A549 (cell line): ENCODE measurements at regions of chr11 and their contacts with region 1.

Region 1: GRCh38 chr11:43895601-43896000 is 15.0 kb downstream of the ALKBH3 start:
- DNase-seq: no peak
- ATAC-seq: no peak
- H3K4me3 ChIP-seq: no peak overlapping the region
- H3K27ac ChIP-seq: no peak overlapping the region
- H3K4me1 ChIP-seq: no peaks in the 10 kb centered on the region
- CTCF ChIP-seq: no peak
- EP300 ChIP-seq: no peak
- POLR2A ChIP-seq: no peak
- RAD21 ChIP-seq: no peak

Region 2: GRCh38 chr11:43819926-43820325 is 75.7 kb before region 1 on chr11:
- CTCF ChIA-PET with region 1: no interaction called
- POLR2A ChIA-PET with region 1: no interaction called
- DNase-seq: no peak
- ATAC-seq: no peak
- H3K4me3 ChIP-seq: no peak overlapping the region
- H3K27ac ChIP-seq: no peak overlapping the region
- H3K4me1 ChIP-seq: no peaks in the 10 kb centered on the region
- CTCF ChIP-seq: no peak
- EP300 ChIP-seq: no peak
- POLR2A ChIP-seq: no peak
- RAD21 ChIP-seq: no peak

Region 3: DNA sequence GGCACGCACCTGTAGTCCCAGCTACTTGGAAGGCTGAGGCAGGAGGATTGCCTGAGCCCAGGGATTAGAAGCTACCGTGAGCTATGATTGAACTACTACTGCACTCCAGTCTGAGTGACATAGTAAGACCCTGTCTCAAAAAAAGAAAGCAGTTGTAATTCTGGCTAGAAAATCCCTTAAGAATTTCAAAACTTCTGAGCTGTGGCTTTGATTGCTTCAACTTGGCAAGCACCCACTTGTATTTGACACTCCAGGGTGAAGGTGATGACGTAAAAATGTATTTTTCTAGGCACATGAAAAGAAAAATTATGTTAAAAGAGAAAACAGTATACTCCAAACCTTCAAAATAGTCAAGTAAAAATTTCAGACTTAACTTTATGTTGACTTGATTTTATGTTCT is 38.6 kb before region 1 on chr11:
- CTCF ChIA-PET with region 1: no interaction called
- POLR2A ChIA-PET with region 1: no interaction called
- DNase-seq: no peak
- ATAC-seq: no peak
- H3K4me3 ChIP-seq: no peak overlapping the region
- H3K27ac ChIP-seq: no peak overlapping the region
- H3K4me1 ChIP-seq: no peaks in the 10 kb centered on the region
- CTCF ChIP-seq: no peak
- EP300 ChIP-seq: no peak
- POLR2A ChIP-seq: no peak
- RAD21 ChIP-seq: no peak

Region 4: DNA sequence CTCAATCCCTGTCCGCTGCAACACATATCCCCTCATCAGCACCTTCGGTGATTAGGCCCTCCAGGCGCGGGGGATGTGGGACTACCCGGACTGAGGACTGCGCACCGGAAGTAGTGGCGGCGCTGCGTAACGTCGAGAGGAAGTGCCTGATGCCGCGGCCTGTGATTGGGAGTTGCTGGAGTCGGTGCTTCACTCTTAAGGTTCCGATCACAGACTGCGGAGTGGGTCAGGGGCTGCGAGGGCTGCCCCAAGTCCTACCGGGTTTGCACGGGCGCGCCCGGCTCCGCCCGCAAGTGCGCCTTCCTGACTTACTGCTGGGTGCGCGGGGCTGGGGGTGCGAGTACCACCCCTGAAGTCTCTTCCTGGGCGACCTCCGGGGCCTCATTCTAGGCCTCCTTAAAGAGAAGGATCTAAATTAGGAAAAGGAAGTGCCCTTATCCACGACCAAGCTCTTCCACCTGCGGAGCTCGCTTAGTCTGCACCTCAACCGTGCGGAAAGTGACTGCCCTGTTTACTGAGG is 14.9 kb before region 1 on chr11 and contains the start of gene ALKBH3:
- CTCF ChIA-PET with region 1: interaction called, 21 read pairs
- POLR2A ChIA-PET with region 1: no interaction called
- DNase-seq: peak; percentile 70 to 97
- ATAC-seq: peak; percentile 99 to 100
- H3K4me3 ChIP-seq: peak within 1 kb of the TSS; percentile 82
- H3K27ac ChIP-seq: peak within 1 kb of the TSS; percentile 65 to 87
- H3K4me1 ChIP-seq: peaks cover 7% of the 10 kb centered on the region; the same call in 1 of the 3 replicates
- CTCF ChIP-seq: no peak
- EP300 ChIP-seq: no peak
- POLR2A ChIP-seq: peak; percentile 53
- RAD21 ChIP-seq: no peak
- polyA plus RNA-seq, gene ALKBH3: 48.7 and 50.2 TPM in 2 replicates

Region 5: DNA sequence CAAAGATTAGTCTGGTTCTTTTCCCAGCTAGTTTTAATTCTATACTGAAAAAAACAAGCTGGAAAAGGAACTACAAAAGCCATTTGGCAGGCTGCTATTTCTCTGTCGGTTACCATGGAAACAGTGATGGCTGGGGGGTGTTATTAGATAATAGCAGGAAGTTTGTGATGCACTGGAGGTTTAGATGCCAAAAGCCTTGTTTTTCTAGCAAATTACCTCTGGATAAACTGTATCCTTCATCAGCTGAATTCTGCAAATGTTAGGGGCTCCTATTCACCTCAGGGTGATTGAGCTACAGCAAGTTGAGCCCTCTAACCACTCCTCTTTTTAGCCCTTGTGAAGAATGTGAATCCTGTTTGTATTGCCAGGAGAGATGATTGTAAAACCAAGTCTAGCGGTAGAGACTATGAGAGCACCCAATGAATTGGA is 10.2 kb after region 1 on chr11:
- CTCF ChIA-PET with region 1: interaction called, 82 read pairs
- POLR2A ChIA-PET with region 1: no interaction called
- DNase-seq: no peak
- ATAC-seq: no peak
- H3K4me3 ChIP-seq: no peak overlapping the region
- H3K27ac ChIP-seq: no peak overlapping the region
- H3K4me1 ChIP-seq: no peaks in the 10 kb centered on the region
- CTCF ChIP-seq: no peak
- EP300 ChIP-seq: no peak
- POLR2A ChIP-seq: no peak
- RAD21 ChIP-seq: no peak

Region 6: DNA sequence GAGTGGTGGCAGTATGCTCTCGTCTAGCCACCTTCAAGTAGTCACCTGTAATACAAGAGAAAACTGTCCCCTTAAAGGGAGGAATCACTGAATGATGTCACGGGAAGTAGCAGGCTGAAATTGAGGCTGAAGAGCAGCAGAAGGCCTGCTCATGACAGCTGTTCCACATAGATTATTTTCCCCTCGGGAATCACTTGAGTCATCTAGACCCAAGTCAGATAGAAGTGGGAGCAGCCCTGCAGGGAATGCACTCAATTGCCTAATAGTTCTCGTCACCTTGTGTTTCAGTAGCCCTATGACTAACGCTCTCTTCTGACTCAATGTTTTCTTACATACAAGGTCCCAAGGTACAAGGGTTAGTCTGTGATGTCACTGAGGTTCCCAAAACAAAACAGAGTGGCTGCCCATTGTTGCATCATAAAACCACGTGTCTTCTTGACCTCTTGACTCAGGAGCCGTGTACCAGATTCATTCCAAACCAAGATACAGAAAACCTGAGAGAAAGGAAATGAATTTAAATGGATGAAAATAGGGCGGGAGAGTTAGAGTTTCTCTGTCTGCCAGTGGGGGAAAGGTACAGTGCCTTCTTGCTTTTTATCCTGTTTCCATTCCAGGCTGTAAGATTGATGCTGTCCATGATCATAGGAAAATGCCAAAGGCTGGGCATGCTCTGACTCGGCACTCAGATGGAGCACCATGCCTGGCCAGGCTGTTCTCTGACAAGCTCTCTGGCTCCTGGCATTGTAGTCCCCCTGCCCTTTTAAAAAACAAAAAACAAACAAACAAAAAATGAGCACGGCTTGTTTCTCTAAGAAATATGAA is 25.2 kb after region 1 on chr11:
- CTCF ChIA-PET with region 1: interaction called, 78 read pairs
- POLR2A ChIA-PET with region 1: no interaction called
- DNase-seq: peak; percentile 95 to 97
- ATAC-seq: peak; percentile 96 to 97
- H3K4me3 ChIP-seq: no peak overlapping the region
- H3K27ac ChIP-seq: peak overlapping the region; percentile 67 to 79
- H3K4me1 ChIP-seq: peaks cover 25% of the 10 kb centered on the region
- CTCF ChIP-seq: no peak
- EP300 ChIP-seq: peak; percentile 61 to 69; a peak in 2 of 5 replicates
- POLR2A ChIP-seq: no peak
- RAD21 ChIP-seq: peak in 1 of 2 experiments; percentile 30; a peak in 2 of 5 replicates

Region 7: DNA sequence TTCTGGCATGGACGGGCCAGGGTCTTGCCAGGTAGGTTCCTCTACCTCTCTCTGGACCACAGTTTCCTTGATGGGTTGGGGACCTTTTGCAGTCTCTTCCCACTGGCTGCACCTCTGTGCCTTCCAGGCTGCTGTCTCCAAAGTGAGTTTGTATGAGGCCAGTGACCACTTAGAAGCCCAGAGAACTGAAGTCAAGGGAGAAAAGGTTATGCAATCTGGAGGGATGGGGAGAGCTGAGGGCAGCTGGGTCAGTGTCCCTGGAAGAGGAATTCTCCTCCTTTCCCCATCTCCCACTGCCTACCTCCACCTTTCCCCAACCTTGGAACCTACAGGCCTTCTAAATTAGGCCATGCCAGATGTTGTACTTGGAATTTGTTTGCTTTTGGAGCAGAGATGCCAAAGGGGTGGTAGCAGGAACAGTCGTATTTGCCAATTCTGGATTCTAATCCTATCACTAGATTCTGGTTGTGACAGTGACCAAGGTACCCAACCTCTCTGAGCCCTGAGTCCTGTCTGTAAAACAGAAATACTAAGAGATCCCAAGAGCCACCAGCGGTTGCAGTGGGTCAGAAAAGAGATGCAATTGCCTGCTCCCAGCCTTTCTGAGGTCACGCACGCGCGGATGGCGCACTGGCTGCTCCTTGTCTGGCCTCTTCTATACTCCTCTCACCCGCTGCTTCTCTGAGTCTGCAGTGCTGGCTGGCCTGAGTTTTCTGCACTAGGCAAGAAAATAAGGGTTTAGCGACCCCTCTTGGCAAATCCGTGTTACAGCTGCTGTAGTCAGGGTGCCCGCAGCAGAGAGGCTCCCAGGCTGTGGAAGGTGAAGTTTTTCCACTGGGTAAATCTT is 141.4 kb after region 1 on chr11:
- CTCF ChIA-PET with region 1: interaction called, 159 read pairs
- POLR2A ChIA-PET with region 1: no interaction called
- DNase-seq: peak; percentile 54 to 72
- ATAC-seq: peak; percentile 90 to 98
- H3K4me3 ChIP-seq: no peak overlapping the region
- H3K27ac ChIP-seq: no peak overlapping the region
- H3K4me1 ChIP-seq: no peaks in the 10 kb centered on the region
- CTCF ChIP-seq: peak; percentile 66
- EP300 ChIP-seq: no peak
- POLR2A ChIP-seq: no peak
- RAD21 ChIP-seq: peak; percentile 85 to 89

Region 8: DNA sequence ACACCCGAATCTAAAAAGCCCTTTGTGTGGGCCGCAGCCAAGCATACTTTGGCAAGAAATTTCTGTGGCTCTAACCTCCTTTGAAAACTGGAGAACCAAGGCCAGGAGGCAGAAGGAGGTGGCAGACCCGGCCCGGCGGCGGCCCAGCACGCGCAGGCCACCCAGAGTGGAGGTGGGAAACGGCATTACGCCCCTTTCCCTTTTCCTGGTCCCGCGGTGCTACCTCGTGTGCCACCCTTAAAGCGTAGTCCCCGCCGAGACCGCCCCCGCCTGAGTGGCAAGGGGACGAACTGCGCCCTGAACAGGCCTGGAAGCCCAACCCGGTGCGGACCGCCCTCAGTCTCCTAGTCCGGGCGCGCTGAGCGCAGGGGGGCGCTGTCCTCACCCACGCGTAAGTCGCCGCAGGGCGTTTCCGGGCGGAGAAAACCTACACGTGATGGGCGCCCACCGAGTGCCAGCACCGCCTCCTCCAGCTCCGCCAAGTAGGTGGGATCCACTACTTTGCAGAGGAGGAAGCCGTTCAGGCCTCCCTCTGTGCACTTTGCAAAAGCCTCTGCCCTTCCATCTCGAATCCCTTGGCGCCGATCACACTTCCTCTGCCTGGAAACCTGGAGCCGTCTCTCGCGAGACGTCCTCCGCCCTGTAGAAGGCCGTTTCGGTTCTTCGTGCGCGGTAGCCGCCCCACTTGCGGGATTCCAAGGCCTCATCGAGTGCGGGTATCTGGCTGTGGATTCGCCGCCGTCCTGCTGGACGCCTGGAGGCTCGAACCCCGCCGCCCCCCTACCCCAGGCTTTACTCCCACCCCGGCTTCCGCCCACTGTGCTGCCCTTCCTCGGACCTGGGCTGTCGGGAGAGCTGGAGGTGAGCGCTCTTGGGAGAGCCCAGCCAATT is 170.5 kb after region 1 on chr11 and contains the start of gene ACCS:
- CTCF ChIA-PET with region 1: interaction called, 11 read pairs
- POLR2A ChIA-PET with region 1: no interaction called
- DNase-seq: peak; percentile 90 to 97
- ATAC-seq: peak; percentile 94 to 99
- H3K4me3 ChIP-seq: peak within 1 kb of the TSS; percentile 75
- H3K27ac ChIP-seq: peak within 1 kb of the TSS; percentile 93 to 97
- H3K4me1 ChIP-seq: peaks cover 10% of the 10 kb centered on the region; the same call in 1 of the 3 replicates
- CTCF ChIP-seq: peak; percentile 67
- EP300 ChIP-seq: no peak
- POLR2A ChIP-seq: peak; percentile 70
- RAD21 ChIP-seq: peak in 1 of 2 experiments; percentile 23; a peak in 2 of 5 replicates
- polyA plus RNA-seq, gene ACCS: 21.7 and 29.0 TPM in 2 replicates